ENCODE measurements at regions of chr21 and their contacts with region 1.

Region 1: GRCh38 chr21:31343680-31344480 is at the start of gene TIAM1:
- DNase-seq: peak; percentile 29 to 80 (median 56)

Region 2: GRCh38 chr21:31203371-31204054 is 140.4 kb before region 1 on chr21:
- intact Hi-C with region 1: no loop called
- DNase-seq: no peak

Region 3: GRCh38 chr21:31397515-31397926 is 53.6 kb after region 1 on chr21:
- intact Hi-C with region 1: loop called (anchors 10 kb)
- DNase-seq: peak in 35 of 42 donors; percentile 15 to 92 (median 59)

Region 4: GRCh38 chr21:31476263-31477022 is 132.6 kb after region 1 on chr21:
- intact Hi-C with region 1: loop called (anchors 10 kb)
- DNase-seq: peak in 4 of 42 donors; percentile 22 to 56 (median 36)

Measured in head of caudate nucleus (tissue), 42 donors.